CD4-positive, alpha-beta T cell (primary cell): ENCODE measurements at regions of chr18 and their contacts with region 1.

Region 1: DNA sequence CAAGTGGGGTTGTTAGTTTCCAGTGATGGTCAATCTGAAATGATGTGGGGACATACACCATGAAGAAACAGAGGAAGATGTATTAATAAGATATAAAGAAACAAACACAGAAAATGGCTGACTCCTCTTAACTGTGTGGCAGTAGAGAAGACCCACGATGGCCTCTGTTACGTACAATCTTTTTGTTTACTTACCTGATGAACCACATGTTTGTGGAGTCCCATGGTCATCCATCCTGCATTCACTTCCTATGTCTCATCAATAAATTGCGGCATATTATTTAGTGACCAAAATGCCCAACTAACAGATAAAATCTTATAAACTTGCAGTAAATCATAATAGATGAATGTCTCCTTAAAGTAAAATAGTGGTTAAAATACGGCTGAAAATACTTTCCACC is 740.1 kb upstream of the LINC00305 start:
- DNase-seq: no peak
- ATAC-seq: no peak
- H3K4me3 ChIP-seq: no peak overlapping the region
- H3K4me3 Mint-ChIP-seq: no peak overlapping the region
- H3K27ac ChIP-seq: no peak overlapping the region
- H3K27ac Mint-ChIP-seq: no peak overlapping the region
- H3K4me1 ChIP-seq: no peaks in the 10 kb centered on the region
- H3K4me1 Mint-ChIP-seq: no peaks in the 10 kb centered on the region
- H3K27me3 ChIP-seq: no peaks in the 10 kb centered on the region
- H3K27me3 Mint-ChIP-seq: no peaks in the 10 kb centered on the region
- CTCF ChIP-seq: no peak

Region 2: DNA sequence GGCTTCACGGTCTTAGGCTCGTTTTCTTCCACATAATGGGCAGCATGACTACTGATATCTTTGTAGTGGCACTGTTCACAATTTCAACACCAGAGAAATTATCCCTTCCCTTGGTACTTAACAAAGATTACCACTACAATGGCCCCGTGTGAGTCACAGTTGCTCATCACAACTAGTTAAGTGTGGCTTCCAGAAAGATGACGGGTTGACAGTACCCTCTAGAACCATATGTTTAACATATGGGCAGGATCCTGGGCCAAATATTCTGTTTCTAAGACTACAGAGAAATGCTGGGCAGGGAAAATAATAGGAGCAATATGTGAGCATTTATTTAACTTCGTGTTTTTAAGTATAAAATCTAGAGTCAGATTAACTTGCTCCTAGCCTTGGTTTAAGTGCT is 40.1 kb after region 1 on chr18:
- CTCF ChIA-PET with region 1: no interaction called
- POLR2A ChIA-PET with region 1: no interaction called
- intact Hi-C with region 1: loop called in 1 of 2 experiments (anchors 2 kb)
- DNase-seq: no peak
- ATAC-seq: no peak
- H3K4me3 ChIP-seq: no peak overlapping the region
- H3K4me3 Mint-ChIP-seq: no peak overlapping the region
- H3K27ac ChIP-seq: no peak overlapping the region
- H3K27ac Mint-ChIP-seq: no peak overlapping the region
- H3K4me1 ChIP-seq: no peaks in the 10 kb centered on the region
- H3K4me1 Mint-ChIP-seq: no peaks in the 10 kb centered on the region
- H3K27me3 ChIP-seq: no peaks in the 10 kb centered on the region
- H3K27me3 Mint-ChIP-seq: no peaks in the 10 kb centered on the region
- CTCF ChIP-seq: no peak

Region 3: DNA sequence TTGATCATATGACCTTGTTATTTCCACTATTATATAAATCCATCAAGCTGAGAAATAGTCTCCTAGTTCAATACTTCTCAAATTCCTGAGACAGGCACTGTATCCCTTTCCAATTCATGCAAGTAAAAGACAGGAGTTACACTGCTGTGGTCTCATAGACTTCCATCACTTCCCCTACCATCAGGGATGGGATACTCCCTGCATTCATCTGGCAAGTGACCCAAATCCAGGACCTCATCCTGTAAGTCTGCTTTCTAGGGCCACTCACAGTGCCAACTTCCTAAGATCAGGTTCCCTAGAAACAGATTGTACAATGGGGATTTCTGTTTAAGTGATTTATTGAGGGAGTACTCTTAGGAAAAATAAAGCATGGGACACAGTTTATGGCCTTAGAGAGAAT is 437.8 kb after region 1 on chr18:
- CTCF ChIA-PET with region 1: no interaction called
- POLR2A ChIA-PET with region 1: no interaction called
- intact Hi-C with region 1: no loop called
- DNase-seq: no peak
- ATAC-seq: no peak
- H3K4me3 ChIP-seq: no peak overlapping the region
- H3K4me3 Mint-ChIP-seq: no peak overlapping the region
- H3K27ac ChIP-seq: no peak overlapping the region
- H3K27ac Mint-ChIP-seq: no peak overlapping the region
- H3K4me1 ChIP-seq: no peaks in the 10 kb centered on the region
- H3K4me1 Mint-ChIP-seq: no peaks in the 10 kb centered on the region
- H3K27me3 ChIP-seq: no peaks in the 10 kb centered on the region
- H3K27me3 Mint-ChIP-seq: no peaks in the 10 kb centered on the region
- CTCF ChIP-seq: no peak